ENCODE measurements at regions of chr11 and their contacts with region 1.

Region 1: GRCh38 chr11:47152953-47153950 is 23.4 kb downstream of the ARFGAP2 start:
- DNase-seq: no peak
- H3K4me3 ChIP-seq: no peak overlapping the region
- H3K27ac ChIP-seq: peak overlapping the region in 1 of 8 donors; percentile 11
- H3K4me1 ChIP-seq: peaks cover 8 to 43% (median 27%) of the 10 kb centered on the region in 6 donors
- H3K27me3 ChIP-seq: no peaks in the 10 kb centered on the region
- CTCF ChIP-seq: peak; percentile 62 to 91 (median 88)
- POLR2A ChIP-seq: no peak

Region 2: DNA sequence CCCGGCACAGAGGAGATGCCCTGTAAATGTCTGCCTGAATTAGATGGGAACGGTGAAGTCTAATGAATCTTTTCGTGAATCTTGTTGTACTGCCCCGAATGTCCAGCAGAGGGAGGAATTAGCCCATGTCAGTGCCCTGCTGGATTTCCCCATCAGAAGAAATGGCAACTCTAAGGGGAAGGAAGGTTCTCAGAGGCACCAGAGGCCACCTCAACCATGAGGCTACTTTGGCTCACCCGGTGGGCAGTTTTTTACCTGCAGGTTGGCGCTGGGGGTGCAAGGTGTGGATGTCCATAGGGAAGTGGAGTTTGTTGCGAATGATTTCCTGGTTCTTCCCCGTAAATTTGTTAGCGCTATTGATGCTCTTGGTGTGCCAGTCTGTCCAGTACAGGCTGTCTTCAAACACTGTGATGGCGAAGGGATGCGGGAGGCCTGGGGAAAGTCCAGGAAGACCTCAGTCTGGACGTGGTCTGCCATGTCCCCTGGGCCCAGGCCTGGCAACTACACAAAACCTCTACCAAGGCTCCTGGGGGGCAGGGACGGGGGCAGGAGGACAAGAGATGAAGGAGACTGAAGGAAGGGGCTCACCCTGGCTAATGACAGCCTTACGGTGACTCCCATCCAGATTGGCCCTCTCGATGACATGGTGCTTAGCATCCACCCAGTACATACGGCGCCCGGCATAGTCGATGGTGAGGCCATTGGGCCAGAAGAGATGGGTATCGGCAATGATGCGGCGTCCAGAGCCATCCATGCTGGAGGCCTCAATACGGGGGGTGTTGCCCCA is 263.4 kb before region 1 on chr11:
- intact Hi-C with region 1: loop called (anchors 2 kb)
- DNase-seq: peak; percentile 58
- H3K4me3 ChIP-seq: no peak overlapping the region
- H3K27ac ChIP-seq: no peak overlapping the region
- H3K4me1 ChIP-seq: peaks cover 0 to 6% (median 4%) of the 10 kb centered on the region in 6 donors
- H3K27me3 ChIP-seq: peaks cover 0 to 4% (median 0%) of the 10 kb centered on the region in 7 donors
- CTCF ChIP-seq: peak; percentile 63 to 91 (median 84)
- POLR2A ChIP-seq: no peak

Region 3: GRCh38 chr11:47325271-47326041 is 172.2 kb after region 1 on chr11:
- intact Hi-C with region 1: no loop called
- DNase-seq: no peak
- H3K4me3 ChIP-seq: no peak overlapping the region
- H3K27ac ChIP-seq: no peak overlapping the region
- H3K4me1 ChIP-seq: peaks cover 0 to 29% (median 22%) of the 10 kb centered on the region in 6 donors
- H3K27me3 ChIP-seq: no peaks in the 10 kb centered on the region
- CTCF ChIP-seq: no peak
- POLR2A ChIP-seq: no peak

Measured in spleen (tissue), 13 donors.